BJ (cell line): ENCODE measurements at regions of chr3 and their contacts with region 1.

Region 1: DNA sequence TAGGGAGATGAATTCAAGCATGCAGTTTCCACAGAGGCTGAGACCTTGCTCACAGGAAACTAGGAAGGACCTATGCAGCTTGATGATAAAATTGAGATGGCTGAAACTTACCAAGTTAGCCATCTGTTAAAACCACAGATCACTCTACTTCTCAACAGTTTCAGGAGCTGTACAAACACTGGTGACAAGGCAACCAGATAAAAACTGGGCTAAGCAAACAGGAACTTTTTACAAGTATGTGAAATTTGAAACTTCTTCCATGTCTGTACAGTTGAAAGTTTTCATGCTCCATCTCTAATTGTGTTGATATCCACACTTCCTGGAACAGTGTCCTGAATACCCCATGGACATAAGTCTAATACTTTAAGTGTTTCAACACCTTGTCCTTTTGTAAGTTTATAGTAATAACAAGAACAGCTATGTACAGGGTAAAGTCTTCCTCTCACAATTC is 78.2 kb downstream of the FAIM start:
- DNase-seq: peak; percentile 71
- H3K4me3 ChIP-seq: no peak overlapping the region
- H3K27me3 ChIP-seq: no peaks in the 10 kb centered on the region
- CTCF ChIP-seq: no peak

Region 2: GRCh38 chr3:138417559-138417982 is 269.2 kb before region 1 on chr3:
- CTCF ChIA-PET with region 1: no interaction called
- POLR2A ChIA-PET with region 1: no interaction called
- DNase-seq: no peak
- H3K4me3 ChIP-seq: no peak overlapping the region
- H3K27me3 ChIP-seq: no peaks in the 10 kb centered on the region
- CTCF ChIP-seq: peak; percentile 98

Region 3: GRCh38 chr3:138646513-138646912 is 40.3 kb before region 1 on chr3:
- CTCF ChIA-PET with region 1: no interaction called
- POLR2A ChIA-PET with region 1: interaction called, 20 read pairs
- DNase-seq: no peak
- H3K4me3 ChIP-seq: no peak overlapping the region
- H3K27me3 ChIP-seq: no peaks in the 10 kb centered on the region
- CTCF ChIP-seq: no peak